H1 (cell line): ENCODE measurements at regions of chr10 and their contacts with region 1.

Region 1: DNA sequence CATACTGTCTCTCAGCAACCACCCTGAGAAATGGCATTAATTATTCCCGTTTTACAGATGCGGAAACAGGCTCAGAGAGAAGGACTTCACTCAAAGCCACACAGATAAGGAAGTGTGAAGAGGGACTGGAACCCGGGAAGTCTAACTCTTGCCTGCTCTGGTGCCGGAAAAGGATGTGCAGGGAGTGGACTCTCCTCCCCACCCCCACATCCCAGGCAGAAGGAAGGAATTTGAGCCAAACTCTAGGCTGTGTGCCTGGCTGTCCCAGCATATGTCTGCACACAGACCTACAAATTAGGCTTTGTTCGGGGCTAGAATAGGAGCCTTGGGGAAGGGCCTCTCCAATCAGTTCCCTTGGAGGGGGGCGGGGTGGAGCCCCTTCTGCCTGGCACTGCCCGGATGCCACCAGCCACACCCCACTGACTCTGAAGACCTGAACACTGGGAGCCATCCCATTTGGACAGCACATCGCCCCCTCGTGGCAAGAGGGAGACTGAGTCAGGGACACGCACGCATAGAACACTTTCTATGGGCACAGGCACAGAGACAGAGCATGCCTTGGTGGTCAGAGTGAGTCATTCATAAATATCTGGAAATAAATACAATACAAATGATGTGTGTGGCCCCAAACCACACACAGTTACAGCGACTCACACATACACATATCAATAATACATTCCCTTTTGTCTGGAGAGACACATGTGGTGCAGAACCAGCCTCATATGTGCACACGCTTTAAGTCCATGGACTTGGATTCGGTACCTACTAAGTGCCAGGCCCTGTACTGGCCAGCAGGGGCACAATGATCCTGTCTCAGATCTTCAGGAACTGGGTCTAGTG is 13.1 kb downstream of the LZTS2 start:
- DNase-seq: peak in 1 of 2 experiments; percentile 88
- H3K4me3 ChIP-seq: no peak overlapping the region
- H3K27ac ChIP-seq: no peak overlapping the region
- H3K4me1 ChIP-seq: peaks cover 0 to 12% (median 7%) of the 10 kb centered on the region in 4 experiments; a peak in 4 of 7 replicates
- H3K27me3 ChIP-seq: peaks cover 5 to 20% (median 14%) of the 10 kb centered on the region in 4 experiments
- CTCF ChIP-seq: peak; percentile 76 to 99 (median 98)
- EP300 ChIP-seq: no peak
- POLR2A ChIP-seq: no peak
- RAD21 ChIP-seq: peak; percentile 55 to 68

Region 2: GRCh38 chr10:100960251-100960650 is 52.5 kb before region 1 on chr10:
- CTCF ChIA-PET with region 1: interaction called, 32 read pairs
- POLR2A ChIA-PET with region 1: no interaction called
- DNase-seq: no peak
- H3K4me3 ChIP-seq: no peak overlapping the region
- H3K27ac ChIP-seq: no peak overlapping the region
- H3K4me1 ChIP-seq: no peaks in the 10 kb centered on the region
- H3K27me3 ChIP-seq: no peaks in the 10 kb centered on the region
- CTCF ChIP-seq: no peak
- EP300 ChIP-seq: no peak
- POLR2A ChIP-seq: no peak
- RAD21 ChIP-seq: no peak

Region 3: GRCh38 chr10:100986952-100987750 is 25.6 kb before region 1 on chr10 and contains the starts of genes MRPL43 and TWNK:
- CTCF ChIA-PET with region 1: interaction called, 464 read pairs
- POLR2A ChIA-PET with region 1: interaction called, 143 read pairs
- DNase-seq: peak in 1 of 2 experiments; percentile 92
- H3K4me3 ChIP-seq: peak within 1 kb of the TSS; percentile 68 to 92 (median 80)
- H3K27ac ChIP-seq: peak within 1 kb of the TSS; percentile 37
- H3K4me1 ChIP-seq: peaks cover 0 to 12% (median 5%) of the 10 kb centered on the region in 4 experiments; a peak in 4 of 7 replicates
- H3K27me3 ChIP-seq: no peaks in the 10 kb centered on the region
- CTCF ChIP-seq: no peak
- EP300 ChIP-seq: no peak
- POLR2A ChIP-seq: peak; percentile 36 to 63; a peak in 2 of 3 replicates
- RAD21 ChIP-seq: no peak
- total RNA-seq, gene MRPL43: 74.1 and 80.9 TPM in 2 replicates
- total RNA-seq, gene TWNK: 32.5 and 34.9 TPM in 2 replicates

Region 4: GRCh38 chr10:101031128-101031795 is 18.5 kb after region 1 on chr10 and contains the starts of genes PDZD7 and SFXN3:
- CTCF ChIA-PET with region 1: interaction called, 171 read pairs
- POLR2A ChIA-PET with region 1: interaction called, 24 read pairs
- DNase-seq: peak in 1 of 2 experiments; percentile 98
- H3K4me3 ChIP-seq: peak within 1 kb of the TSS; percentile 41 to 66 (median 58)
- H3K27ac ChIP-seq: no peak within 1 kb of the TSS
- H3K4me1 ChIP-seq: peaks cover 0 to 26% (median 21%) of the 10 kb centered on the region in 4 experiments; a peak in 6 of 7 replicates
- H3K27me3 ChIP-seq: peaks cover 1 to 45% (median 36%) of the 10 kb centered on the region in 4 experiments
- CTCF ChIP-seq: no peak
- EP300 ChIP-seq: no peak
- POLR2A ChIP-seq: no peak
- RAD21 ChIP-seq: no peak
- total RNA-seq, gene PDZD7: 0.88 and 1.1 TPM in 2 replicates
- total RNA-seq, gene SFXN3: 2.8 and 3.1 TPM in 2 replicates

Region 5: DNA sequence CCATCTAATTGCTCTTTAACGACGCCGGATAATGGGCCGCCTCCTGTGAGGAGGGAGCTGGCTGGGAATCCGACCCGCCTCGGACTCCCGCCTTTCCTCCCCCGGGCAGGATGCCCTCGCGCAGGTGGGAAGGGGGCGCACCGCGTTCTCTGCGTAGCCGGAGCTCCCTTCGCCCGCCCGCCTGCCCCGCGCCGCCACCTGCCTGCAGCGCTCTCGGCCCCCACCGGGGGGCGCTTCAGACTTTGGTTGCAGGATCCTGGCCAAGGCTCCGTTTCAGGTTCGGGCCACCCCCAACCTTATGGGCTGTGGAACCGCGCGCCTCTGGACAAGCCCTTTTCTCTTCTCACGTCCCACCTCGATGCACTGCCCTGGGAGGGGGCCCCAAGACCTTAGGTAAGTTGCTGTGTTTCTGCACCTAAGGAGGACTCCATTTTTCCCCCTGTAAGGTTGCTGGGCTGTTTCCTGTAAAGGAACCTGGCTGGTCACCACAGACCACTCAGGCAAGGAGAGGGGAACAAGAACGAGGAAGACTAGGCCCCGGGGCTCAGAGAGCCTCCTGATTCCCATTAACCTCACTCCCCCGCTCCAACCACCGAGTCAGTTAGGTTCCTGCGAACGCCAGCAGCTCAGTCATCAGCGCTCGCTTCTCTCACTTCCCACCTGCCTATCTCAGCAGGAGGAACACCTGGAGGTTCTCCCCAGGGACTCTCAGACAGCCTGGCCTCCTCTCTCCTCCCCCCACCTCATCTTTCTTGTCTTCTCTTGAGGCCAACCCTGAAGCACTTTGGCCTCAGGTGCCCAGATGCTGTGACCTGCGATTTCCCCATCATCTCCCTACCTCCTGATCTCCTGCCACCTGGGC is 37.7 kb after region 1 on chr10:
- CTCF ChIA-PET with region 1: interaction called, 110 read pairs
- POLR2A ChIA-PET with region 1: interaction called, 5 read pairs
- DNase-seq: peak in 1 of 2 experiments; percentile 99
- H3K4me3 ChIP-seq: peak overlapping the region in 2 of 4 experiments; percentile 10 to 49; a peak in 3 of 8 replicates
- H3K27ac ChIP-seq: no peak overlapping the region
- H3K4me1 ChIP-seq: peaks cover 9 to 23% (median 17%) of the 10 kb centered on the region in 4 experiments
- H3K27me3 ChIP-seq: peaks cover 38 to 66% (median 60%) of the 10 kb centered on the region in 4 experiments
- CTCF ChIP-seq: peak; percentile 73 to 95 (median 84)
- EP300 ChIP-seq: no peak
- POLR2A ChIP-seq: no peak
- RAD21 ChIP-seq: peak; percentile 64 to 74

Region 6: DNA sequence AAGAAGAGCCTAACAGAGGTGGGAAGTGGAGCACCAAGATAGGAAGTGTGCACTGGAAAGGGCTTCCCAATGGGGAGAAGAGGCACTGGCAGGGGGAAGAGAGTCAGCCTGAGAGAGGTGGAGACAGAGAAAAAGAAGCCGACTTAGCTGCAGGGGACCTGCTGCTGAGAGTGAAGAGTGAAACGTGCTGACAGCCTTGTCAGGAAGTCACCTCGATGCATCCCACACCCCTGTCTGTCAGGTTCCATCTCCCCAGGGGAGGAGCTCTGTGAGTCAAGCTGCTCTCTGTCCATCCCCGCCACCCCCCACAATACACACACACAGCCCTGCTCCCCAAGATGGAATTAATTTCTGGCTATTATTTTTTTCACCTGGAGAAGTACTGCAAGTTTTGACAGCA is 63.0 kb after region 1 on chr10:
- CTCF ChIA-PET with region 1: interaction called, 12 read pairs
- POLR2A ChIA-PET with region 1: interaction called, 3 read pairs
- DNase-seq: no peak
- H3K4me3 ChIP-seq: no peak overlapping the region
- H3K27ac ChIP-seq: no peak overlapping the region
- H3K4me1 ChIP-seq: peaks cover 0 to 8% (median 3%) of the 10 kb centered on the region in 4 experiments; a peak in 4 of 7 replicates
- H3K27me3 ChIP-seq: peaks cover 5 to 52% (median 40%) of the 10 kb centered on the region in 4 experiments
- CTCF ChIP-seq: no peak
- EP300 ChIP-seq: no peak
- POLR2A ChIP-seq: no peak
- RAD21 ChIP-seq: no peak

Region 7: DNA sequence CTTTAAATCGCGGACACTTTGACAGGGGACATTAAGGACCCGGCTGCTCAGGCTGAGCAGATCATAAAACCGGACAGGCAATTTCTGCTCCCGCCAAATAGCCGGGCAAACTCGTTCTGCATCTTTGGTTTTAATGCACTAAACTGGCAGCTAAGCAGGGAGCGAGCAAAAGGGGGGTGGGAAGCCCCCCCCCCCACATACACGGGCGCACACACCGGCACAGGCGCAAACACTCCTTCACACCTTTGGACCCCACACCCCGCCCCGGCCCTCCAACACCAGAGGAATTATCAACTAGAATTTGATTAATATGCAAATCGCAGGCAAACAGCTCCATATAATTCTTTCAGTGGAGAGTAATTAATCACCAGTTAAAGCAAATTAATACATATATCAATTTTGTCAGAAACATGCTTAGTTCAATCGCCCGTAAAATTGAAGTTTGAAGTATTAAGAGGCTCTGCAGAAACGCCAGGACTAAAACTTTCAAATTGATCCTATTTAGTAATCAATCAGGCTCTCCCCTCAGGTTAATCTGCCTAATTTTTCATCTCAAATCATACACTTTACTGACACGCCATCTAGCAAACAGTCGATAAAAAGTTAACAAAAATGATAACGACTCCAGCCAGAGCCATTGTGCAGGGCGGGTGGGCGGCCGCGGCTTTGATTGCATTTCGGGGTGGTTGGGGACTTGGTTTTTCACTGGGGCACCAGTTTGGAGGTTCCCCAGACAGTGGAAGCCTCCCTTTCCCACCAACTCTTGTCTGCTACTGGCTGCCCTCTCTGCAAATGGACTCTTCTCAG is 206.6 kb after region 1 on chr10:
- CTCF ChIA-PET with region 1: no interaction called
- POLR2A ChIA-PET with region 1: no interaction called
- DNase-seq: no peak
- H3K4me3 ChIP-seq: no peak overlapping the region
- H3K27ac ChIP-seq: no peak overlapping the region
- H3K4me1 ChIP-seq: peaks cover 0 to 21% (median 12%) of the 10 kb centered on the region in 4 experiments; a peak in 5 of 7 replicates
- H3K27me3 ChIP-seq: peaks cover 96 to 100% (median 99%) of the 10 kb centered on the region in 4 experiments
- CTCF ChIP-seq: no peak
- EP300 ChIP-seq: no peak
- POLR2A ChIP-seq: no peak
- RAD21 ChIP-seq: no peak